B cell (primary cell): ENCODE measurements at regions of chr11 and their contacts with region 1.

Region 1: GRCh38 chr11:43643898-43644620 is 36.5 kb upstream of the HSD17B12 start:
- DNase-seq: peak; percentile 87
- ATAC-seq: peak; percentile 99
- H3K4me3 ChIP-seq: peak overlapping the region; percentile 67 to 94 (median 84)
- H3K4me3 Mint-ChIP-seq: peak overlapping the region; percentile 89
- H3K27ac ChIP-seq: peak overlapping the region; percentile 32 to 74
- H3K27ac Mint-ChIP-seq: peak overlapping the region; percentile 78
- H3K4me1 ChIP-seq: peaks cover 7 to 10% of the 10 kb centered on the region in 2 donors
- H3K4me1 Mint-ChIP-seq: peaks cover 22% of the 10 kb centered on the region
- H3K27me3 ChIP-seq: peaks cover 0 to 17% (median 8%) of the 10 kb centered on the region in 4 experiments
- H3K27me3 Mint-ChIP-seq: peaks cover 16% of the 10 kb centered on the region
- CTCF ChIP-seq: no peak

Region 2: DNA sequence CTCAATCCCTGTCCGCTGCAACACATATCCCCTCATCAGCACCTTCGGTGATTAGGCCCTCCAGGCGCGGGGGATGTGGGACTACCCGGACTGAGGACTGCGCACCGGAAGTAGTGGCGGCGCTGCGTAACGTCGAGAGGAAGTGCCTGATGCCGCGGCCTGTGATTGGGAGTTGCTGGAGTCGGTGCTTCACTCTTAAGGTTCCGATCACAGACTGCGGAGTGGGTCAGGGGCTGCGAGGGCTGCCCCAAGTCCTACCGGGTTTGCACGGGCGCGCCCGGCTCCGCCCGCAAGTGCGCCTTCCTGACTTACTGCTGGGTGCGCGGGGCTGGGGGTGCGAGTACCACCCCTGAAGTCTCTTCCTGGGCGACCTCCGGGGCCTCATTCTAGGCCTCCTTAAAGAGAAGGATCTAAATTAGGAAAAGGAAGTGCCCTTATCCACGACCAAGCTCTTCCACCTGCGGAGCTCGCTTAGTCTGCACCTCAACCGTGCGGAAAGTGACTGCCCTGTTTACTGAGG is 236.6 kb after region 1 on chr11 and contains the start of gene ALKBH3:
- CTCF ChIA-PET with region 1: no interaction called
- POLR2A ChIA-PET with region 1: no interaction called
- intact Hi-C with region 1: loop called (anchors 1 kb)
- DNase-seq: peak; percentile 93
- ATAC-seq: peak; percentile 99
- H3K4me3 ChIP-seq: peak within 1 kb of the TSS; percentile 54 to 96 (median 82)
- H3K4me3 Mint-ChIP-seq: peak within 1 kb of the TSS; percentile 95
- H3K27ac ChIP-seq: peak within 1 kb of the TSS; percentile 3 to 62
- H3K27ac Mint-ChIP-seq: peak within 1 kb of the TSS; percentile 82
- H3K4me1 ChIP-seq: peaks cover 14 to 15% of the 10 kb centered on the region in 2 donors
- H3K4me1 Mint-ChIP-seq: peaks cover 19% of the 10 kb centered on the region
- H3K27me3 ChIP-seq: peaks cover 0 to 26% (median 8%) of the 10 kb centered on the region in 4 experiments
- H3K27me3 Mint-ChIP-seq: peaks cover 26% of the 10 kb centered on the region
- CTCF ChIP-seq: no peak
- total RNA-seq, gene ALKBH3: 26.7 and 27.3 TPM in 2 replicates